GM12878 (cell line): ENCODE measurements at regions of chr17 and their contacts with region 1.

Region 1: DNA sequence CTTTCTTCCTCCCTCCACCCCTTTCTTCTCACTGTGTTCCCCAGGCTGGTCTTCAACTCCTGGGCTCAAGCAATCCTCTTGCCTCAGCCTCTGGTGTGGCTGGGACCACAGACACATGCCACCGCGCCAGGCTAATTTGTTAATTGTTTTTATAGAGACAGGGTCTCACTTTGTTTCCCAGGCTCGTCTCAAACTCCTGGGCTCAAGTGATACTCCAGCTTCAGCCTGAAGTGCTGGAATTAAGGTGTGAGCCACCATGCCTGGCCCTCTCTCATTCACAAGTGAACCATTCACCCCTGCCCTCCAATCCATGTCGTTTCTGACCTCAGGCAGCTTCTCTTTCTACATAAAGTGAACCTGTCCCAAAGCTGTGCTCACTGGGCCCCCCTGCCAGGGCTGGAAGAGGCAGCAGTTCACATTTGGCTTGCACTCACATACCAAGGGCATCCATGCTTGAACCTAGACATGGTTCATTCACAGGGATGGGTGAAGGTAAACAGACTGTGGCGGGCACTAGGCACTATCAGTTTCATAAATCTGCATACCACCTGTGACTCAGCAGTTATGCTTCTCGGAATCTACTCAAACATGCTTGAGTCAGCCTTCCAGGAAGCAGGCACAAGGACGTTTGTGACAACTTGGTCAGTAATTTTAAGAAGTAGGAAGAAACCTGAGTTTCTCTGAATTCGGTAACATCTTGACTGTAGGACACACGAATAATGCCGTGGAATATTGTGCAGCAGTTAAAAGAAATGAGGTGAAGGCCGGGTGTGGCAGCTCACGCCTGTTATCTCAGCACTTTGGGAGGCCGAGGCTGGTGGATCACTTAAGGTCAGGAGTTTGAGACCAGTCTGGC is 6.0 kb upstream of the RNF213 start:
- DNase-seq: peak; percentile 86
- ATAC-seq: peak; percentile 87
- H3K4me3 ChIP-seq: 0 out of 2 replicates have a peak overlapping the region, but pooled peaks have one; percentile 5
- H3K27ac ChIP-seq: peak overlapping the region; percentile 84
- H3K4me1 ChIP-seq: peaks cover 41% of the 10 kb centered on the region
- H3K27me3 ChIP-seq: no peaks in the 10 kb centered on the region
- CTCF ChIP-seq: no peak
- EP300 ChIP-seq: no peak
- POLR2A ChIP-seq: no peak
- RAD21 ChIP-seq: no peak

Region 2: GRCh38 chr17:80189611-80190010 is 65.0 kb before region 1 on chr17:
- CTCF ChIA-PET with region 1: no interaction called
- POLR2A ChIA-PET with region 1: no interaction called
- RAD21 ChIA-PET with region 1: no interaction called
- SMC1A ChIA-PET with region 1: no interaction called
- in situ Hi-C with region 1: no loop called
- intact Hi-C with region 1: no loop called
- DNase-seq: no peak
- ATAC-seq: no peak
- H3K4me3 ChIP-seq: no peak overlapping the region
- H3K27ac ChIP-seq: no peak overlapping the region
- H3K4me1 ChIP-seq: no peaks in the 10 kb centered on the region
- H3K27me3 ChIP-seq: no peaks in the 10 kb centered on the region; a peak in 1 of 4 replicates
- CTCF ChIP-seq: no peak
- EP300 ChIP-seq: no peak
- POLR2A ChIP-seq: no peak
- RAD21 ChIP-seq: no peak

Region 3: GRCh38 chr17:80219013-80219762 is 35.4 kb before region 1 on chr17:
- CTCF ChIA-PET with region 1: no interaction called
- POLR2A ChIA-PET with region 1: interaction called, 5 read pairs
- RAD21 ChIA-PET with region 1: interaction called, 3 read pairs
- SMC1A ChIA-PET with region 1: interaction called, 3 read pairs
- in situ Hi-C with region 1: no loop called
- intact Hi-C with region 1: loop called (anchors 5 kb)
- DNase-seq: peak; percentile 66
- ATAC-seq: peak; percentile 93
- H3K4me3 ChIP-seq: peak overlapping the region; percentile 94
- H3K27ac ChIP-seq: peak overlapping the region; percentile 75
- H3K4me1 ChIP-seq: peaks cover 4% of the 10 kb centered on the region
- H3K27me3 ChIP-seq: no peaks in the 10 kb centered on the region
- CTCF ChIP-seq: no peak
- EP300 ChIP-seq: peak; percentile 41 to 63; a peak in 2 of 4 replicates
- POLR2A ChIP-seq: no peak
- RAD21 ChIP-seq: no peak

Region 4: GRCh38 chr17:80414803-80415625 is 160.4 kb after region 1 on chr17 and contains the start of gene ENDOV:
- CTCF ChIA-PET with region 1: no interaction called
- POLR2A ChIA-PET with region 1: no interaction called
- RAD21 ChIA-PET with region 1: no interaction called
- SMC1A ChIA-PET with region 1: no interaction called
- in situ Hi-C with region 1: no loop called
- intact Hi-C with region 1: no loop called
- DNase-seq: peak; percentile 56
- ATAC-seq: peak; percentile 96
- H3K4me3 ChIP-seq: peak within 1 kb of the TSS; percentile 93
- H3K27ac ChIP-seq: peak within 1 kb of the TSS; percentile 87
- H3K4me1 ChIP-seq: no peaks in the 10 kb centered on the region
- H3K27me3 ChIP-seq: no peaks in the 10 kb centered on the region
- CTCF ChIP-seq: no peak
- EP300 ChIP-seq: no peak
- POLR2A ChIP-seq: peak; percentile 84
- RAD21 ChIP-seq: no peak
- polyA plus RNA-seq, gene ENDOV: 0.63 to 4.5 TPM

Region 5: DNA sequence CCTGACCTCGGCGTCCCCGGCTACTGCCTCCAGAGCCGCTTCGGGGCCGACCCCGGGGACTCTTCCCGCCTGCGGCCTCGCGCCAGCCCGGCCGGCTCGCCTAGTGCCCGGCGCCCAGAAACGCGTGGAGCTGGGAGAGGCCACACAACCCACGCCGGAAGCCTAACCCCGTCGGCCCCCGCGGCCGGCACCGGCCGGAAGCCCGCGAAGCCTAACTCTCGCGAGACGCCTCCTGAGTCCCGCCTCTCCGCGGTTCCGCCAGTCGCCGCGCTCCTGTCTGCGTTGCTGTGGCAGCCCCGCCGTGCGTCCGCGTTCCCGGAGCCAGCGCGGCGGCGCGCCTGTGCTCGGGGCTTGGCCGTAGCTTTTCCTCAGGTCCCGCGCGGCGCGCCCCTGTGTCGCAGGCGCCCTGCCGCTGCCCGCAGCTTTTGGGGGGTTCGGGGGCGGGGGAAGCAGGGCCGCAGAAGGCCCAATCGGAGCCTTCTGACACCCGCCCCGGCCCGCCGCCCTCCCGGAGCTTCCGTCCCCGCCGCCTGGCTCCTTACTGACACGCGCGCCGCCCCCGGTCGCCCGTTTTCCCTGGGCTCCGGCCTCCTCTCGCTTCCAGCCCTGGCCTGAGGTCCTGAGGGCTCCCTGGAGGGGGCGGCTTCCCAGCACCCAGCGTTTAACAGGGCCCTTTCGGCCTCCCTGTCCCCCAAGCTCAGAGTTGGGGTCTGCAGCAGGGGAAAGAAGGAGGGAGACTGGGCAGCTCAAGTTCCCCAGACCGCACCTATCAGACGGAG is 200.1 kb after region 1 on chr17:
- CTCF ChIA-PET with region 1: no interaction called
- POLR2A ChIA-PET with region 1: no interaction called
- RAD21 ChIA-PET with region 1: no interaction called
- SMC1A ChIA-PET with region 1: no interaction called
- in situ Hi-C with region 1: no loop called
- intact Hi-C with region 1: no loop called
- DNase-seq: peak; percentile 84
- ATAC-seq: peak; percentile 96
- H3K4me3 ChIP-seq: peak overlapping the region; percentile 96
- H3K27ac ChIP-seq: peak overlapping the region; percentile 89
- H3K4me1 ChIP-seq: peaks cover 8% of the 10 kb centered on the region
- H3K27me3 ChIP-seq: peaks cover 0 to 3% of the 10 kb centered on the region in 2 experiments; a peak in 1 of 4 replicates
- CTCF ChIP-seq: no peak
- EP300 ChIP-seq: 0 out of 4 replicates have a peak, but pooled peaks of 1 of the 2 experiments have one; percentile 8
- POLR2A ChIP-seq: peak; percentile 89
- RAD21 ChIP-seq: no peak